ENCODE measurements at regions of chr17 and their contacts with region 1.

Region 1: GRCh38 chr17:57243171-57243948 is 13.0 kb upstream of the MSI2 start:
- DNase-seq: peak; percentile 52 to 80
- ATAC-seq: peak; percentile 84 to 95 (median 89)
- H3K4me3 ChIP-seq: no peak overlapping the region
- H3K27ac ChIP-seq: peak overlapping the region; percentile 65
- H3K4me1 ChIP-seq: peaks cover 15% of the 10 kb centered on the region
- H3K27me3 ChIP-seq: no peaks in the 10 kb centered on the region
- CTCF ChIP-seq: peak; percentile 96

Region 2: DNA sequence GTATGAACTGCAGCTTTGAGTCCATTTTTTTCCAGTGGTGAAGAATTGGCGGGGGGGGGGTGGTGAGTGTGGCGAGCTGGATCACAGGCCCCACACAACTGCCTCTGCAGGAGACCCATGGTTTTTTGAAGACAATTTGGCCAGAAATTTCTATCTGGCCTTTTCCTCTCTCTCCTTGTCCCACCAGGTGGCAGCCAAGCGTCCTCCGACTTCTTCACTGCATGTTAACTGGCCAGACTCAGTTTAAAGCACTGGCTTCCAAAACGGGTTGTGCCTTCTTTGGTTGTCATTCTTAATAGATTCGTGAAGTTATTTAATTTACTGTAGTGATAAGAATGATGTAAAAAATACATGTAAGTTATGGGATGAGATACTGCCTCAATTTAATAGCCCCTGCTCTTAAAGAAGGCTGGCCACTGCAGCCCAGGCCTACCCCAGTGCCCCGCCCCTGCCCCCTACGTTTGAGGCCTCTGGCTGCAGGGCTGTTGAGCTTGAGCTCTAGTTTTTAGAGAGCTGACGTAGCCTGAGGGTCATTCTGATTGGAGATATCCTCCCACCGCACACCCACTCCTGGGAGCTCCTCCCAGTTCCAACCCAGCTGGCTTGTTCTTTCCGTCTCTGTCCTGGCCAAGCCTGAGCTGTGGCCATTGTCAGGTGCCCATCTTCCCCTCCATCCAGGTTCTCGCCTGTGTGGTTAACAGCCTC is 121.9 kb before region 1 on chr17:
- intact Hi-C with region 1: loop called in 1 of 2 experiments (anchors 5 kb)
- DNase-seq: no peak
- ATAC-seq: peak in 2 of 4 donors; percentile 40 to 56
- H3K4me3 ChIP-seq: no peak overlapping the region
- H3K27ac ChIP-seq: no peak overlapping the region
- H3K4me1 ChIP-seq: no peaks in the 10 kb centered on the region
- H3K27me3 ChIP-seq: no peaks in the 10 kb centered on the region
- CTCF ChIP-seq: peak; percentile 44

Region 3: GRCh38 chr17:57486873-57487301 is 243.5 kb after region 1 on chr17:
- intact Hi-C with region 1: loop called in 1 of 2 experiments (anchors 5 kb)
- DNase-seq: no peak
- ATAC-seq: no peak
- H3K4me3 ChIP-seq: no peak overlapping the region
- H3K27ac ChIP-seq: peak overlapping the region; percentile 14
- H3K4me1 ChIP-seq: peaks cover 70% of the 10 kb centered on the region
- H3K27me3 ChIP-seq: no peaks in the 10 kb centered on the region
- CTCF ChIP-seq: no peak

Region 4: GRCh38 chr17:57662644-57663308 is 419.4 kb after region 1 on chr17:
- intact Hi-C with region 1: loop called in 1 of 2 experiments (anchors 5 kb)
- DNase-seq: peak; percentile 97
- ATAC-seq: peak; percentile 97 to 98 (median 97)
- H3K4me3 ChIP-seq: peak overlapping the region; percentile 45
- H3K27ac ChIP-seq: peak overlapping the region; percentile 85
- H3K4me1 ChIP-seq: peaks cover 26% of the 10 kb centered on the region
- H3K27me3 ChIP-seq: no peaks in the 10 kb centered on the region
- CTCF ChIP-seq: peak; percentile 9

Region 5: GRCh38 chr17:57671667-57672632 is 428.6 kb after region 1 on chr17:
- intact Hi-C with region 1: loop called in 1 of 2 experiments (anchors 5 kb)
- DNase-seq: peak; percentile 70 to 82
- ATAC-seq: peak; percentile 82 to 92 (median 88)
- H3K4me3 ChIP-seq: no peak overlapping the region
- H3K27ac ChIP-seq: no peak overlapping the region
- H3K4me1 ChIP-seq: no peaks in the 10 kb centered on the region
- H3K27me3 ChIP-seq: no peaks in the 10 kb centered on the region
- CTCF ChIP-seq: peak; percentile 88

Region 6: DNA sequence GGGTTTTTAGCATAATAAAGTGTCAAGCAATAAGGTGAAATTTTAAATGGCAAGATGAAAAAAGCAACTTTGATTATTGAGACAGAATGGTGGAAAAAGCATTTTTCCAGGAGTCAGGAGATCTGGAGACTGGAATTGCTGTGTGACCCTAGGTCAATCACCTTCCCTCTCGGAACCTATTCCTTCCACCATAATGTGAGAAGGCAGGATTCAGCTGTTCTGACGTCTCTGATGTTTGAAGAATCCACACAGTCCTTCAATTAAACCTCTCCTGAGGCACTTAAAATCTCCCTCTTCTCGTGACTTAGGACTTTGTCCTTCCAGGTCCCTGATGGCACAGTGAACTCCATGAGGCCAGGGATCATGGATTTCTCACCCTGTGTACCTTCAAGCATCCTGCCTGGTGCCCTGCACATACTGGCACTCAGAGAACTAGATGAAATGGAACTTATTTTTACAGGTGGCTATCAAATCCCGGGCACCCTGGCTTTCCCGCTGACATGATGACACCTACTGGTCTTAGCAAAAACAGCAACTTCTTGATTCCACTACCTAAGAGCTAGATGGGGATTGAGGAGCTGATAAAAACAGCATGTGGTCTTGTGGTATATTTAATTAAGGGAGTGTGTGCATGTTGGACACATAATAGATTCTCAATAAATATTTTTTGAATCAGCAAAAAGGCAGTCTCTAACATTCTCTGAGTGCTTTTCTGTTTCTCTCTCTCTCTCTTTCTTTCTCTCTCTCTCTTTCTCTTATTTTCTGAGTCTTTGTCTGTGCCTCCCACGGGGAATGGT is 504.1 kb after region 1 on chr17:
- intact Hi-C with region 1: loop called in 1 of 2 experiments (anchors 5 kb)
- DNase-seq: no peak
- ATAC-seq: peak; percentile 73 to 92 (median 82)
- H3K4me3 ChIP-seq: no peak overlapping the region
- H3K27ac ChIP-seq: no peak overlapping the region
- H3K4me1 ChIP-seq: no peaks in the 10 kb centered on the region
- H3K27me3 ChIP-seq: no peaks in the 10 kb centered on the region
- CTCF ChIP-seq: peak; percentile 77

Measured in psoas muscle (tissue), 8 donors.